ENCODE measurements at regions of chr10 and their contacts with region 1.

Region 1: DNA sequence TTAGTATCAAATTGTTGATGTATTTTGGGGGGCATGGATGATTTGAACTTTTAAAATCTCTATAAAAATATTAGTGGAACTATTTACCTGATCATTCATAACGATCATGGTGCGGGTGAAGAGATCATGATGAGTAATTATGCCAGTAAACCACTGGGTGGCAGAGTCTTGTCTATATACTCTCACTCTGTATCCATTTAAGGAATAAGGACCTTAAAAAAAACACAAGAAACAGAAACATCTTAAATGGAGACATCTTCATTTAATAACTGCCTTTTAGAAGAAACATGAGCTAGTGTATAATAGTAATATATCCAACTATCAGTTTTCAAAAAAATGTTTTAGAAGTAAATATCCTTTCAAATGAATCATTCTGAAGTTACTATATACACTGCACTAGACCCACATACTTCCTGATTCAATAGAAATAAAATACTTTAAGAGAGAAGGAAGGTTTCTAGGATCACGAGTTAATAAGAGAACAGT is 84.0 kb downstream of the NRBF2 start:
- DNase-seq: peak; percentile 25

Region 2: GRCh38 chr10:62916141-62916603 is 301.0 kb before region 1 on chr10:
- CTCF ChIA-PET with region 1: no interaction called
- POLR2A ChIA-PET with region 1: no interaction called
- DNase-seq: no peak

Region 3: DNA sequence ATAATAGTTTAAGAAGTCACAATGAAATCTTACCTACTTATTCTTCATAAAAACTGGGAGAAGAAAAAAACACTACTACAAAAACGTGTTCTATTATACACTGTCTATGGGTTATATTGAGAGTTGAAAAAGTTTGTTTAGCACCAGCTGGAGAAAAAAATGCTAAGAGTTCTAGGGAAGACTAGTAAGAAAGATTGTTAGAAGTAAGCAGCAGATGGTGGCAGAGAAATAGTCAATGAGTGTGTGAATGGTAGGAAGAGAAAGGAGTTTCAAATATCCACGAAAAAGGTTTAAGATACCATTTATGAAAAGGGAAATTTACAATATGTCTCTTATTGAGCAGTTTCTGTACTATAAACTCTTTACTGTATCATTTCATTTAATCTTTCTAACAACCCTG is 40.6 kb after region 1 on chr10:
- CTCF ChIA-PET with region 1: interaction called, 12 read pairs
- POLR2A ChIA-PET with region 1: no interaction called
- DNase-seq: no peak

Region 4: GRCh38 chr10:63383141-63383540 is 166.0 kb after region 1 on chr10:
- CTCF ChIA-PET with region 1: no interaction called
- POLR2A ChIA-PET with region 1: no interaction called
- DNase-seq: no peak

Measured in HEK293T (cell line).